ENCODE measurements at regions of chr10 and their contacts with region 1.

Region 1: DNA sequence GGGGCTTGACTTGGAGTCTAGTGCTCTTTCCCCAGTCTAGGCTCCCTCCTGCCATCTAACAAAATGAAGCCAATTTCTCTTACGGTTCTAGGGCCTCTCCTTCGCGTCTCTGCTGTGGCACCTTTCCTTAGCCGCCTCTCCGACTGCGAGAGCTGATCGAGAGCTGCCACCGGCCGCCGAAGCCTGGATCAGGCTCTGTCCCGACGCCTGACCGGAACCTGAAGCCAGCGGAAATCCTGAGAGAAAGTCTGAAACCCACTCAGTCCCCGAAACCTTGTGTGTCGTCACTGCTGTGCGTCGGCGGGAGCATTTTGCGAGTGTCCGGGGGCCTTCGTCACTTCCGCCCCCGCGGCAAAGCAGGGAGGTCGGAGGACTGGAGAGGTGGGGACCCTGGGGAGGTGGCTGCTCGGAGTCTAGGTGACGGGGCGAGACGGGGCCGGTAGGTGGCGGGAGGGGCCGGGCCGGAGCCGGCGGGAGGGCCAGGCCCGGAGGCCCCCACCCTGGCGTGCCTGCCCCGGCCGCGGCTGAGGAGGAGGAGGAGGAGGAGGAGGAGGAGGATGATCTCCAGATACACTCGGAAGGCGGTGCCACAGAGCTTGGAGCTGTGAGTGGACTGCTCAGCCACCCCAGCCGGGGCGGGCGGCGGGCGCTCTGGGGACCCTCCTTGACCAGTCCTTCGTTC is at the starts of genes ECD and FAM149B1:
- DNase-seq: peak; percentile 91 to 94 (median 92)
- H3K4me3 ChIP-seq: peak within 1 kb of the TSS; percentile 83 to 96
- H3K4me3 Mint-ChIP-seq: peak within 1 kb of the TSS; percentile 97 to 100 (median 100)
- H3K27ac ChIP-seq: peak within 1 kb of the TSS; percentile 93
- H3K27ac Mint-ChIP-seq: peak within 1 kb of the TSS; percentile 99 to 100 (median 100)
- H3K4me1 ChIP-seq: peaks cover 41% of the 10 kb centered on the region
- H3K4me1 Mint-ChIP-seq: peaks cover 33 to 48% (median 38%) of the 10 kb centered on the region in 4 donors
- H3K27me3 ChIP-seq: no peaks in the 10 kb centered on the region
- H3K27me3 Mint-ChIP-seq: no peaks in the 10 kb centered on the region
- total RNA-seq, gene ECD: 31.1 to 35.3 TPM
- total RNA-seq, gene FAM149B1: 18.1 to 20.5 TPM

Region 2: DNA sequence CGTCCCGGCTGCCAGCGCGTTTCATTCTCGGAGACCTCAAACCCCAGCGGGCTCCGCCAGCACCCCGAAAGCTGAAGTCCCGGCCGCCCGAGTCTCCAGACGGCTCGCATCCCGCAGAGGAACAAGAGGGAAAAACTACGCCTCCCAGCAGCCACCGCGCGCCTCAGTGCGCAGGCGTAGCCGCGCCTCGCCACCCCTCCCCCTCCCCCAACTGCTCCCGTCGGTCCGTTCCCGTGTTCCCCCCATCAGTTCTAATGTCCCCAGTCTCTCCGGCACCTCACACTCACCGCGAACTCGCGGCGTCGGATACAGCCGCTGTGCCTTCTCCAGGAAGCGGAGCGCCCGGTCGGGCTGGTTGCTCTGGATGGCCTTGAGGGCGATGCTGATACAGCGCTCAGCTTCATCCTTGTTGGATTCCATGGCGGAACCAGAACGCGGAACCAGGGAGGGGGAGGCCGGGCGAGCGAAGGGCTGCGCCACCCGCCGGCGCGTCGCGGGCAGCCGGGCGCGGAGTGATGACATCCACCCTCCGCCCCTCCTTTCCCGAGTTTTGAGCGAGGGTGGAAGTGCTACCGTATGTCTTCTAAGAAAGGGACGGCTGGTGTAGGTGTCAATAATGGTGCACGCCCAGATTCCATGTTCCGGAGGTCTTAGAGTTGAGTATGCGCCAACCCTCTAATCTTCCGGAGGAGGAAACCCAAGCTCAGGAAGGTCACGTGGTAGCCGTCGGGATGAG is 813.3 kb before region 1 on chr10 and contains the start of gene DNAJB12:
- CTCF ChIA-PET with region 1: no interaction called
- POLR2A ChIA-PET with region 1: no interaction called
- intact Hi-C with region 1: loop called (anchors 2 kb)
- DNase-seq: peak; percentile 92 to 97 (median 94)
- H3K4me3 ChIP-seq: peak within 1 kb of the TSS; percentile 92 to 99
- H3K4me3 Mint-ChIP-seq: peak within 1 kb of the TSS; percentile 94 to 99 (median 97)
- H3K27ac ChIP-seq: peak within 1 kb of the TSS; percentile 80
- H3K27ac Mint-ChIP-seq: peak within 1 kb of the TSS; percentile 90 to 99 (median 98)
- H3K4me1 ChIP-seq: peaks cover 34% of the 10 kb centered on the region
- H3K4me1 Mint-ChIP-seq: peaks cover 30 to 54% (median 42%) of the 10 kb centered on the region in 4 donors
- H3K27me3 ChIP-seq: no peaks in the 10 kb centered on the region
- H3K27me3 Mint-ChIP-seq: no peaks in the 10 kb centered on the region
- total RNA-seq, gene DNAJB12: 26.3 to 26.7 TPM

Region 3: GRCh38 chr10:73246783-73247508 is 79.0 kb after region 1 on chr10 and contains the start of gene DNAJC9:
- CTCF ChIA-PET with region 1: interaction called, 3 read pairs
- POLR2A ChIA-PET with region 1: interaction called, 13 read pairs
- intact Hi-C with region 1: loop called (anchors 2 kb)
- DNase-seq: peak; percentile 95 to 98 (median 96)
- H3K4me3 ChIP-seq: peak within 1 kb of the TSS; percentile 53 to 87
- H3K4me3 Mint-ChIP-seq: peak within 1 kb of the TSS; percentile 96 to 99 (median 97)
- H3K27ac ChIP-seq: peak within 1 kb of the TSS; percentile 82
- H3K27ac Mint-ChIP-seq: peak within 1 kb of the TSS; percentile 94 to 99 (median 98)
- H3K4me1 ChIP-seq: peaks cover 50% of the 10 kb centered on the region
- H3K4me1 Mint-ChIP-seq: peaks cover 35 to 74% (median 56%) of the 10 kb centered on the region in 4 donors
- H3K27me3 ChIP-seq: no peaks in the 10 kb centered on the region
- H3K27me3 Mint-ChIP-seq: no peaks in the 10 kb centered on the region
- total RNA-seq, gene DNAJC9: 31.6 to 31.7 TPM